ENCODE measurements at regions of chr17 and their contacts with region 1.

Region 1: DNA sequence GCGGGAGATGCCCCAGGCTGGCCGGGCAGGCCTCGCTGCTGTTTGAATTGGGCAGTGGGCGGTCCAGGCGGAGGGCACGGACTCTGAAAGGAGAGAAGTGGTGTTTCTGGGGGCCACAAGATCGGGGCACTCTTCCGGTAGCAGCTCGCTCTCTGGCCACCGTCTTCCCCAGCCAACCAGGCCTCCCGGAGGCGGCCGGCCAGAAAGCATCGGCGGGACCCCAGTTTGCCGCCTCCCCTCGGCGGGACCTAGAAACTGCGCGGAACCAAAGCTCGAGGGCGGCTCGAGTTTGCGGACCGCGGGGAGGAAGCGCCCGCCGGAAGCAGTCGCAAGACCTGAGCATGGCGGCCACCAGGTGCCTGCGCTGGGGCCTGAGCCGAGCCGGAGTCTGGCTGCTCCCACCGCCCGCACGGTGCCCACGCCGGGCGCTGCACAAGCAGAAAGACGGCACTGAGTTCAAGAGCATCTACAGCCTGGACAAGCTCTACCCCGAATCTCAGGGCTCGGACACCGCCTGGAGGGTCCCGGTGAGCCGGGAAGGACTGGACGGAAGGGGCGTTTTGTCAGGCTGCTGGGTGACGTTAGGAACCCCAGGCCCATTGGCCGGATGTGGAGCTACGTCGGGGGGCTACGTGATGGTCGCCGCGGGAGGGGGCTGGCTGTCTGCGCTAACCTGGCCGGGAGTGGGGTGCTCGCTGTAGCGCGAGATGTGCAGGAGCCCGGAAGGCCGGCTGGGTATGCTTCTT is at the start of gene MRPL58:
- DNase-seq: peak; percentile 94
- H3K4me3 ChIP-seq: peak within 1 kb of the TSS; percentile 73
- H3K27ac ChIP-seq: peak within 1 kb of the TSS; percentile 54
- H3K4me1 ChIP-seq: peaks cover 16% of the 10 kb centered on the region
- CTCF ChIP-seq: peak; percentile 63
- total RNA-seq, gene MRPL58: 79.8 and 84.2 TPM in 2 replicates

Region 2: DNA sequence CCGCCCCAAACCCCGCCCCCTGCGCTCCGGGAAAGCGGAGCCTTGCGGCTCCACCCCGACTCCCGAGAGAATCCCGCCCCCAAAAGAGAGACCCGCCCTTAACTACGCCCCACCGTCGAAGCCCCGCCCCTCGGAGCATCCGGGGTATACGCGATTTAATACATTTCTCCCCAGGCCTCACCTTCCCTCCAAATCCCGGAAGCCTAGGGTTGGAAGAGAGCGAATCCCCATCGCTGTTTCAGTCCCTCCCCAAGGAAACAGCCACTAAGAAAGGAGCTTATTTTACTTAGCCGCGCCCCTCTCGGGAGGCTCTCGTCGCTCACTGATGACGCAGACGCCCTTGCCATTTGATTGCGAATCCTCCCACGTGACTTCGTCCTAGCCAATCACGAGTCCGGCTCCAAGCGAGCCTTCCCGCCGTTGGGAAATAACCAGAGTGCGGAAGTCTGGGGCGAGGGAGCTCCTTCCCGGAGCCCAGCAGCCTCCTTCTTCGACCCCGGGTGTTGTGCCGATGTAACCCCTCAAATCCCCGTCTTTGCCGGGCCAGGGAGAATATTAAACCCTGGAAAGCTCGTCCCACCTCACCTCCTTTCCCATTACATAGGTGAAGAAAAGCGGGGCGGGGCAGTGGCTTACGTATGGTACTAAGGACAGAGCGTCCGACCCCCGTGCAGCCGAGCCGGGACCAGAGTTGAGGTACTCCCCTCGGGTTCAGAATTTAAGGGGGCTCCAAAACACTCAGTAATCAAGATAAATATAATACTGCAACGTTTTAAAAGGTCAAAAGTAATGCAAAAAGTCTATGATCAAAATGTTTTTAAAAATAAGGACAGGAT is 139.3 kb before region 1 on chr17:
- CTCF ChIA-PET with region 1: no interaction called
- POLR2A ChIA-PET with region 1: interaction called, 11 read pairs
- intact Hi-C with region 1: no loop called
- DNase-seq: peak; percentile 100
- H3K4me3 ChIP-seq: peak overlapping the region; percentile 78
- H3K27ac ChIP-seq: peak overlapping the region; percentile 53
- H3K4me1 ChIP-seq: peaks cover 24% of the 10 kb centered on the region
- CTCF ChIP-seq: no peak

Region 3: GRCh38 chr17:75024686-75025397 is 12.3 kb after region 1 on chr17:
- CTCF ChIA-PET with region 1: interaction called, 9 read pairs
- POLR2A ChIA-PET with region 1: interaction called, 14 read pairs
- intact Hi-C with region 1: no loop called
- DNase-seq: no peak
- H3K4me3 ChIP-seq: no peak overlapping the region
- H3K27ac ChIP-seq: no peak overlapping the region
- H3K4me1 ChIP-seq: no peaks in the 10 kb centered on the region
- CTCF ChIP-seq: no peak

Region 4: DNA sequence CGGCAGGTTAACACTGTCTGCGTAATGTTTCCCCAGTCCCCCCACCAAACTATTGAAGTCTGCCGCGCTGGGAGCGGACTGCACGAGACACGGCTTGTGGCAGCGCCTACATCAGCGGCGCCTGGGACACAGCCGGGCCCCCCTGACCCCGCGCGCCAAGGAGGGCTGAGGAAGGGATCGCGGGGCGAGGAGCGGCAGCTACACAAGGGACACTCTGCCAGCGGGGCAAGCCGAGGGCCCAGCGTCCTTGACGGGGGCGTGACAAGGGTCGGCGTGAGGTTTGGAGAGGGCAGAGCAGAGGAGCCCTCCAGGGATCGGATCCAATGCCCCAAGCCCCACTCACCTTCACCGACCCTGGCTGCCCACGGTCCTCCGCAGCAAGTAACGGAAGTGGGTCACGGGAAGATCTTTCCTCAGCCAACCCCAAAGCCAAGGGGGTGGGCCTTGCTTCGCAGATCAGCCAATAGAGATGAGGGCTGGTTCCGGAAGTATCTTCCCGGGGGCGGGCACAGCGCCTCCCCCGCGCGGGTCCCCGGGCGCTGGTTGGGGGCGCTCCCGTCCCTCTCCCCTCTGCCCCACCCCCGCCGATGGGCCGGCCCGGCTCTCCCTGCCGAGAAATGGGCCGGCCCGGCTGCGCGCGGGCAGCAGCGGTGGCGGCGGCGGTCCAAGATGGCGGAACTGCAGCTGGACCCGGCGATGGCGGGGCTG is 34.2 kb after region 1 on chr17 and contains the starts of genes ATP5PD and KCTD2:
- CTCF ChIA-PET with region 1: interaction called, 3 read pairs
- POLR2A ChIA-PET with region 1: interaction called, 27 read pairs
- intact Hi-C with region 1: loop called (anchors 1 kb)
- DNase-seq: peak; percentile 99
- H3K4me3 ChIP-seq: peak within 1 kb of the TSS; percentile 75
- H3K27ac ChIP-seq: peak within 1 kb of the TSS; percentile 43
- H3K4me1 ChIP-seq: peaks cover 14% of the 10 kb centered on the region
- CTCF ChIP-seq: 0 out of 2 replicates have a peak, but pooled peaks have one; percentile 15
- total RNA-seq, gene ATP5PD: 293 and 301 TPM in 2 replicates
- total RNA-seq, gene KCTD2: 26.0 and 29.8 TPM in 2 replicates

Measured in OCI-LY7 (cell line).